A673 (cell line): ENCODE measurements at regions of chr17 and their contacts with region 1.

Region 1: GRCh38 chr17:67475236-67475937 is 98.3 kb downstream of the PITPNC1 start:
- DNase-seq: peak; percentile 89
- H3K4me3 ChIP-seq: no peak overlapping the region
- H3K27ac ChIP-seq: peak overlapping the region; percentile 6
- H3K4me1 ChIP-seq: peaks cover 48% of the 10 kb centered on the region
- H3K27me3 ChIP-seq: no peaks in the 10 kb centered on the region
- CTCF ChIP-seq: peak; percentile 99

Region 2: GRCh38 chr17:67386965-67387551 is 88.3 kb before region 1 on chr17:
- CTCF ChIA-PET with region 1: interaction called, 27 read pairs
- POLR2A ChIA-PET with region 1: no interaction called
- intact Hi-C with region 1: loop called (anchors 1 kb)
- DNase-seq: peak; percentile 73
- H3K4me3 ChIP-seq: no peak overlapping the region
- H3K27ac ChIP-seq: no peak overlapping the region
- H3K4me1 ChIP-seq: peaks cover 12% of the 10 kb centered on the region
- H3K27me3 ChIP-seq: no peaks in the 10 kb centered on the region
- CTCF ChIP-seq: peak; percentile 97

Region 3: DNA sequence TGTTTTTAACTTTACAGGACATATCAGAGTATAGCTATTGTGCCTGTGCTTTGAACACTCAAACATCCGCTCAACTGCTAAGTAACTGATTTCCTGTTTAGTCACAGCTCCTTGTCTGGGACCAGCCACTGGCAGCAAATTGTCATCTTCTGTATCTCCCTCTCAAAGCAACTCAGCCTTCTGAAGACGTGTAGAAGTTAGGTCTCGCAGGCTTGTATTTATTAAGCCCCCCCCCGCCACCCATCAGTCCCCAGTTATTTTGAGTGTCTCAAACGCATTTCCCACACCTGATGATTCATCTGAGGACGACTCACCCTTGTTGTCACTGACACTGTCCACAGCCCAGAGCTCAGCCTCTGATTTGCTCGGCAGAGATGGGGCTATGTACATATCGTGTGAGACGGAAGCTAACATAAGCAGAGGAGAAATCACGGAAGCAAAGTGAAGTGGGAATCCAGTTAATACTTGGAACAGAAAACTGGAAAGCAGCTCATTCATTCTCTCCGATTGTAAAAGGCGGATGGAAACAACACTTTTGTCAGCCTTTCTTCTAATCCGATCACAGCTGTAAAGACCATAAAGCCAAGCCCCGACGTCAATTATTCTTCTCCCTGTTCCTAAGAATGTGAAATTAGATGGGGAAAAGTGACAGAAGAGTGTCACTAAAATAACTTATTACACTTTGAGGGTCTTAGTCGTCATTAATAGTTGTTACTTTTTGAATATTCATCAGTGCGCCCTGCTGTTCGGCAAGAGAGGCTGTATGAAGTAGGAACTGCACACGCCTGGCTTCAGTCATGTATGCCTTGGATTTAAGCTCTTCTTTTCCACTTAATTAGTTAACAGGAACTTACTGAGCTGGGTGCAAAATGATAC is 34.1 kb before region 1 on chr17:
- CTCF ChIA-PET with region 1: interaction called, 10 read pairs
- POLR2A ChIA-PET with region 1: interaction called, 3 read pairs
- intact Hi-C with region 1: no loop called
- DNase-seq: peak; percentile 90
- H3K4me3 ChIP-seq: peak overlapping the region; percentile 39
- H3K27ac ChIP-seq: peak overlapping the region; percentile 90
- H3K4me1 ChIP-seq: peaks cover 55% of the 10 kb centered on the region
- H3K27me3 ChIP-seq: no peaks in the 10 kb centered on the region
- CTCF ChIP-seq: no peak

Region 4: GRCh38 chr17:67544364-67544955 is 69.1 kb after region 1 on chr17:
- CTCF ChIA-PET with region 1: no interaction called
- POLR2A ChIA-PET with region 1: no interaction called
- intact Hi-C with region 1: no loop called
- DNase-seq: no peak
- H3K4me3 ChIP-seq: no peak overlapping the region
- H3K27ac ChIP-seq: no peak overlapping the region
- H3K4me1 ChIP-seq: no peaks in the 10 kb centered on the region
- H3K27me3 ChIP-seq: no peaks in the 10 kb centered on the region
- CTCF ChIP-seq: no peak

Region 5: GRCh38 chr17:67629971-67630320 is 154.6 kb after region 1 on chr17:
- CTCF ChIA-PET with region 1: no interaction called
- POLR2A ChIA-PET with region 1: no interaction called
- intact Hi-C with region 1: loop called (anchors 5 kb)
- DNase-seq: peak; percentile 76
- H3K4me3 ChIP-seq: no peak overlapping the region
- H3K27ac ChIP-seq: peak overlapping the region; percentile 60
- H3K4me1 ChIP-seq: peaks cover 7% of the 10 kb centered on the region
- H3K27me3 ChIP-seq: no peaks in the 10 kb centered on the region
- CTCF ChIP-seq: peak; percentile 71

Region 6: DNA sequence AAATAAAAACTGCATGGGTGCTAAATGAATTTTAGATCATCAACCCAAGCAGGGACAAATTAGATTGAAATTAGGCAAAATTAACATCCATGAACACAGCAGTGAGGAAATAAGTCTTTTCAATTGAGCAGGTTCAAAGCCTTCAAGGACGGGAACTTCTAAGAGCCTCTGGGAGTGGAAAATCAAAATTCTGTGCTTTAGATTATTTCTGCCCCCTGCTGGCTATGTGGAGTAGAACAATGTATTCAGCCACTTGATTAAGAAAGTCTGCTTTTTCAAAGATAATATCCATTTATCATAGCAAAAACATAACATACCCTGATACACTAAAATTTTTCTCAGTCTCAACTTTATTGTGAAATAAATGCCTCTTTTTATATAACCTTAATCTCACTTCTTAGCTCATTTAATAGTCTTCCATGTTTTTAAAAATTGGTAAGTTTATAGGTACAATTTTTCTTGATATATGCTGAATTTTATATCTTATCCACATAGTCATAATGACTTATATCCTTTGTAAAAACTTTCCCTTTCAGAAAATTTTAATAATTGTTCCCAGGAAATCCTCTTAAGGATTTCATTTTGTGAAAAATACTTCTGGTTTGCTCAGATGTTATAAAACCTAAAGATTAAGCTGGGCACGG is 214.3 kb after region 1 on chr17:
- CTCF ChIA-PET with region 1: interaction called, 4 read pairs
- POLR2A ChIA-PET with region 1: no interaction called
- intact Hi-C with region 1: loop called (anchors 10 kb)
- DNase-seq: peak; percentile 85
- H3K4me3 ChIP-seq: no peak overlapping the region
- H3K27ac ChIP-seq: no peak overlapping the region
- H3K4me1 ChIP-seq: peaks cover 24% of the 10 kb centered on the region
- H3K27me3 ChIP-seq: no peaks in the 10 kb centered on the region
- CTCF ChIP-seq: peak; percentile 82